ENCODE measurements at regions of chr10 and their contacts with region 1.

Region 1: GRCh38 chr10:4849555-4850242 is 23.7 kb downstream of the AKR1E2 start:
- DNase-seq: peak; percentile 93 to 97 (median 95)
- ATAC-seq: peak; percentile 75 to 84
- H3K4me3 ChIP-seq: no peak overlapping the region
- H3K27ac ChIP-seq: peak overlapping the region; percentile 66
- H3K4me1 ChIP-seq: peaks cover 16% of the 10 kb centered on the region
- H3K27me3 ChIP-seq: no peaks in the 10 kb centered on the region

Region 2: DNA sequence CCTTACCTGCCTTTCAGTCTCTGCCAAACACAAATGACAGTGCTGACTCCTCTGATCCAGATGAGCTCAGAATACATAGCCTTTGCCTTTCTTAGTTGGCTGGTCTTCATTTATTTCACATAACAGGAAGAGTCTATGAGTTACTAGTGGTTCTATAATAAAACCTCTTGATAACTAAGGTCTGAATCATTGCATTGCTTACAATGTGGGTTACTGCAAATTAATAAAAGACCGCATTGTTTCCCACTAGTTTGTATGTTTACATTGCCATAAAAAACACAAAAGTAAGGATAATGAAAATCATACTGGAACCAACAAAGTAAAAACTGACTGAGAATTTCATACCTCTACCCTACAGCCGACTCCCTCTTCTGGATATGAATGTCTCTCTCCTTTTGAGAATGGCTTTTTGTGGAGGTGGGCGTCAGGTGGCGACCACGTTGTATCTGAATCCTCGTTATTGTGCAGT is 85.7 kb before region 1 on chr10:
- intact Hi-C with region 1: no loop called
- DNase-seq: no peak
- ATAC-seq: no peak
- H3K4me3 ChIP-seq: no peak overlapping the region
- H3K27ac ChIP-seq: no peak overlapping the region
- H3K4me1 ChIP-seq: peaks cover 1% of the 10 kb centered on the region
- H3K27me3 ChIP-seq: no peaks in the 10 kb centered on the region

Region 3: DNA sequence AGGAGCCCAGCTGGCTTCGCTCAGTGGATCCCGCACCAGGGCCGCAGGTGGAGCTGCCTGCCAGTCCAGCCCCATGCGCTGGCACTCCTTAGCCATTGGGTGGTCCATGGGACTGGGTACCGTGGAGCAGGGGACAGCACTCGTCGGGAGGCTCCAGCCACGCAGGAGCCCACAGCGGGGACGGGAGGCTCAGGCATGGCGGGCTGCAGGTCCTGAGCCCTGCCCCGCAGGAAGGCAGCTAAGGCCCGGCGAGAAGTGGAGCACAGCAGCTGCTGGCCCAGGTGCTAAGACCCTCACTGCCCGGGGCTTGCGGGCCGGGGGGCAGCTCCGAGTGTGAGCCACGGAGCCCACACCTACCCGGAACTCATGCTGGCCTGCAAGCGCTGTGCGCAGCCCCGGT is 87.6 kb after region 1 on chr10:
- intact Hi-C with region 1: no loop called
- DNase-seq: peak in 1 of 3 donors; percentile 51
- ATAC-seq: no peak
- H3K4me3 ChIP-seq: no peak overlapping the region
- H3K27ac ChIP-seq: no peak overlapping the region
- H3K4me1 ChIP-seq: no peaks in the 10 kb centered on the region
- H3K27me3 ChIP-seq: no peaks in the 10 kb centered on the region

Region 4: GRCh38 chr10:4947635-4948596 is 98.2 kb after region 1 on chr10:
- intact Hi-C with region 1: loop called in 1 of 4 experiments (anchors 5 kb)
- DNase-seq: peak in 2 of 3 donors; percentile 47 to 53
- ATAC-seq: peak; percentile 87 to 94
- H3K4me3 ChIP-seq: no peak overlapping the region
- H3K27ac ChIP-seq: peak overlapping the region; percentile 95
- H3K4me1 ChIP-seq: no peaks in the 10 kb centered on the region
- H3K27me3 ChIP-seq: no peaks in the 10 kb centered on the region

Region 5: DNA sequence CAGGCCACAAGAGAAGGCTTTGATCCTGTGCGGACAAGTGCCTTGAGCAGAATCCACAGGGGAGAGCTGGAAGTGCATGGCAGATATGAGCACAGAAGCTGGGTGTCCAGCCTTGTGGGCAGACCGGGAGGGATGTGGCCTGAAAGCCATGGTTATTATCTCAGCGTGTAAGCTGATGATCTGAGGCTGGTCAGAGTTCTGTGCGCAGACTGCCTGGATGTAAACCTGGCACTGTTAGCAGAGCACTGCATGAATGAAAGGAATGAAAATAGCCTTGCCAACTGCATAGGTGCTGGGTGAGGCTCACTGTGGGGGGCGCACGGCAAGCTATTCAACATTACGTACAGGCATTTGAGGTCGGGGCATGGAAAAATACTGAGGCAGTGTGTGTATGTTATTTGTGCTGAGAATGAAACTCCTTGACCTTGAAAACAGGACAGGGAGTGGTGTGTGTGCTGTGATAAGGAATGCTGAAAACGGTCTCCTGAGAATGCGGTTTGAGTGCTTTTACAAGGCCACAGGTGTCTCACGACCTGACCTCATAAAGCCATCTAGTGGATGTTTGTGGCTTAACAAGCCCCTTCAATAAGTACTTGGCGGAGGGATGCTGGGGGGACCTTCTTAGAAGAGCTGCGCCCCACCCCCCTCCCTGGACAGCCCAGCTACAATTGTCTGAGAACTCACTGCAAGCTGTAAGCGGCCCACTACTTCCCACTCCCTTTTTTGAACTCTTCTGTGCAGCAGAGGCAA is 132.2 kb after region 1 on chr10:
- intact Hi-C with region 1: loop called in 1 of 4 experiments (anchors 10 kb)
- DNase-seq: peak; percentile 23 to 64 (median 38)
- ATAC-seq: peak; percentile 66 to 69
- H3K4me3 ChIP-seq: no peak overlapping the region
- H3K27ac ChIP-seq: peak overlapping the region; percentile 74
- H3K4me1 ChIP-seq: peaks cover 6% of the 10 kb centered on the region
- H3K27me3 ChIP-seq: no peaks in the 10 kb centered on the region

Region 6: DNA sequence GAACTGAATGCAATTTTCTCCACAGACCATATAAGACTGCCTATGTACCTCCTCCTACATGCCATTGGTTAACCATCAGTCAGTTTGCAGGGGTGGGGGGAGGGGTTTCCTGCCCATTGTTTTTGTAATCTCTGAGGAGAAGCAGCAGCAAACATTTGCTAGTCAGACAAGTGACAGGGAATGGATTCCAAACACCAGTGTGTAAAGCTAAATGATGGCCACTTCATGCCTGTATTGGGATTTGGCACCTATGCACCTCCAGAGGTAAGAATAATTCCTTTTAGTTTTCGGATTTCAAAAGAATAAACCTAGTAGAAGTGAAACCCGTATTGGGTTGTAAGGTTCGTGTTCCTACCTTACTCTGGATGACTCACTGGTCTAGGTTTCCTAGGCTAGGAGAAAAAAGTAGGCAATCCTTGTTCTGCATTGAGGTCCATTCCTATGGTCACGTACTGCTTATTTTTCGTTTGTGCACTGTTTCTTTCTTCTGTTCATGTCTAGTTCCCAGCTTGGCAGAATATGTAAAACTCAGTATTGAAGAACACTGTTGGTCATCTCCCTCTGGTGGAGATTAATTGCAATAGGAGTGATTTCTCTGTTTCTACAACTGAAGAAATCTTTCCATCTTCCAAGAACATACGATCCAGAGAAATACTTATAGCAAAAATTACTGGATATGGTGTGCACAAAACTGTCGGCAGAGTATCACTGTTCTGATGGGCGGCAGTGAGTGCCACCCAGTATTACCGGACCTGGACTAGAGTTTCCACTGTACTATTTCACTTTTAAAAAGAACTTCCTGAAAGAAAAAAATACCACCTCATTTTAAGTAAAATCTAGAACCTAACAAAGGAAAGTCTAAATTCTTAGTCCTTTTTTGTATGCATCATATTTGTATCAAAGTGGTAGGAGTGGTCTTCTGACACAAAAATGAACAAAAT is 244.8 kb after region 1 on chr10 and contains the start of gene AKR1C3:
- intact Hi-C with region 1: loop called (anchors 2 to 10 kb)
- DNase-seq: no peak
- ATAC-seq: peak; percentile 88 to 89
- H3K4me3 ChIP-seq: peak within 1 kb of the TSS; percentile 99
- H3K27ac ChIP-seq: peak within 1 kb of the TSS; percentile 67
- H3K4me1 ChIP-seq: no peaks in the 10 kb centered on the region
- H3K27me3 ChIP-seq: no peaks in the 10 kb centered on the region
- total RNA-seq, gene AKR1C3: 28.1 to 60.8 (median 54.1) TPM

Region 7: GRCh38 chr10:5283305-5284158 is 433.8 kb after region 1 on chr10:
- intact Hi-C with region 1: loop called in 3 of 4 experiments (anchors 2 to 10 kb)
- DNase-seq: peak; percentile 68 to 83 (median 71)
- ATAC-seq: peak; percentile 89 to 92
- H3K4me3 ChIP-seq: no peak overlapping the region
- H3K27ac ChIP-seq: no peak overlapping the region
- H3K4me1 ChIP-seq: no peaks in the 10 kb centered on the region
- H3K27me3 ChIP-seq: no peaks in the 10 kb centered on the region

Region 8: DNA sequence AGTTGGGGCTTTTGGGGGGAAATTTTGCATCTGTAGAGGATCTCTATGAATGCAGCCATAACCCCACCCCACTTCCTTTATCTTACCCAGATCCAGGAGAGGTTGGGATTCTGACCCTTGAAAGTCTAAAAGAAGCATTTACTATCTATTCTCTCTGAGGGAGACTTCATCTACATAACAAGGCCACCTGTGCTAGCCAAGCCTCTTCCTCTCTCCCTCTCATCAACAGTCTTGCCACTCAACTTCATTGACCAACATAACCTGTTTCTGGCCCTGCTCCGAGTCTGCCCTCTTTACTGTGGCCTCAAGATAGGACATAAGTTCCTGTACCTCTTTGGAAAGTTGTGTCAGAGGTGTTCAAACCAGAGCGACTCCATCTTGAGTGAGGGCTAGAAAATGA is 535.5 kb after region 1 on chr10:
- intact Hi-C with region 1: loop called in 1 of 4 experiments (anchors 5 kb)
- DNase-seq: no peak
- ATAC-seq: no peak
- H3K4me3 ChIP-seq: no peak overlapping the region
- H3K27ac ChIP-seq: no peak overlapping the region
- H3K4me1 ChIP-seq: no peaks in the 10 kb centered on the region
- H3K27me3 ChIP-seq: no peaks in the 10 kb centered on the region

Region 9: DNA sequence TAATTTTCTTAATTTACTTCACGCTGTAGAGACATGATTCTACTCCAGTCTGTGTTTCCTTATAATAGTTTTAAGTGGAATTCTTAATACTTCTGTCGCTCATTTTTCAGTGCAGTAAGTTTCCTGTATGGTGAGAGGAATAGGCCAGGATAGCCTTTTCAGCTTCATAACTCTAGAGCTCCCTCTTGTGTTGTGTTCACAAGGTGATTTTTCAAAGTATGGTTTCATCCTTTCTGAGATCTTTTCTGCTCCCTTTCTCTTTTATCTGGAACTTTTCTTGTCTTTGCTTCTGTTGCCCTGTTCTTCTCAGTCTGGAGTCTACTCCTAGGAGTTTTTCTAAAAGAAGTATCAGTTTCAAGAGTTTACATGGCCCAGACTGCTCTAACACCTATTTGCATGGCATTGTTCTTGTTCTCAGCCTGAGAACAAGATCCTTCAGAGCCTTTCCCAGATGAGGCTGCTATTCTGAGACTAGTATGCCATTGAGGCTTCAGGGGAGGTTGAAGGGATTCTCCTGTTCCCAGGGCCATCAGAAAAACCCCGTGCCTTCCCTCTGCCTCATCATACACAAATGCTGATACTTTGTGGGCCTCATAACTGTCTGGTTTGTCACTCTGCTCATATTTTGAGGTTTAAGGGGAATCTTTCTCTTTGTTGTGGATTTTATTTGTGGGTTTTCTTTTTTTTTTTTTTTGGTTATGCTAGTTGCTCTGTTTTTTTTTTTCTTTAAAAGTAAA is 584.5 kb after region 1 on chr10:
- intact Hi-C with region 1: loop called in 1 of 4 experiments (anchors 10 kb)
- DNase-seq: no peak
- ATAC-seq: peak; percentile 26 to 73
- H3K4me3 ChIP-seq: no peak overlapping the region
- H3K27ac ChIP-seq: no peak overlapping the region
- H3K4me1 ChIP-seq: no peaks in the 10 kb centered on the region
- H3K27me3 ChIP-seq: no peaks in the 10 kb centered on the region

Measured in right cardiac atrium (tissue), 5 donors.